ENCODE measurements at regions of chr11 and their contacts with region 1.

Region 1: DNA sequence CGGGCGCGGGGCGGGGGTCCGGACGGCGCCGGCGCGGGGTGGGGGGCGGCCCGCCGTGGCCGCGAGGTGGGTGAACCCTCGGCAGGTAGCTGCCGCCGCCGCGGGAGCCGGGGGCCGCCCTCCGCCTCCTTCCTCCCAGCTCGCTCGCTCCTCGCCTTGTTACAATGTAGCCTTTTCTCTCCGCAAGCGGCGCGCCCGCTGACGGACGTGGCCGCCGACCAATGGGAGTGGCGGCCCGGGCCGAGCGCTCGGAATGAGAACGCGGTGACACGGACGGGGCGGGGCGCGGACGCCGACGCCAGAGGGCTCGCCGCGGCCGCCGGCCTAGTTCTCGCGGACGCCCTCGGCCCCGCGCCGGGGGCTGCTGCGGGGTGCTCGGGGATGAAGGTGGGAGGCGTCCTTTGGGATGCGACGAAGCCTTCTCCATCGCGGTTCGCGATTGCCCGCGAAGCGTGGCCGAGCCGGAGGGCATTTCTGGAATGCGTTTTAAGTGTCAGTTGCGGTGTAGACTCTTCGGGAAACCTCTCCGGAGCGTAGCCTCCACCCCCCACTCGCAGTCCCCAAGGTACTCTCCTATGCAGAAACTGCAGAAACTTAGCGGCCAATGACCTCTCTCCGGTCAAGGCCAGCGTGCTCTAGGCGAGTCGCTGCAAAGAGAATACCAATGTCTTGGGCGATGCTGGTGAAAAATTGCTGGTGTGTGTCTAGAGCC is 734 bp downstream of the PRDM11 start:
- DNase-seq: peak; percentile 84 to 96 (median 91)
- ATAC-seq: peak; percentile 96
- H3K4me3 ChIP-seq: peak overlapping the region; percentile 78 to 89
- H3K4me3 Mint-ChIP-seq: peak overlapping the region; percentile 84
- H3K27ac ChIP-seq: peak overlapping the region; percentile 52 to 70
- H3K27ac Mint-ChIP-seq: peak overlapping the region; percentile 89
- H3K4me1 ChIP-seq: peaks cover 16% of the 10 kb centered on the region
- H3K4me1 Mint-ChIP-seq: peaks cover 38% of the 10 kb centered on the region
- H3K27me3 ChIP-seq: no peaks in the 10 kb centered on the region
- H3K27me3 Mint-ChIP-seq: peaks cover 10% of the 10 kb centered on the region
- CTCF ChIP-seq: no peak

Region 2: GRCh38 chr11:44065841-44066731 is 1081.1 kb before region 1 on chr11 and contains the start of gene ACCS:
- CTCF ChIA-PET with region 1: no interaction called
- POLR2A ChIA-PET with region 1: no interaction called
- intact Hi-C with region 1: loop called in 1 of 2 experiments (anchors 5 kb)
- DNase-seq: peak; percentile 80 to 96 (median 93)
- ATAC-seq: peak; percentile 96
- H3K4me3 ChIP-seq: peak within 1 kb of the TSS; percentile 80 to 83
- H3K4me3 Mint-ChIP-seq: peak within 1 kb of the TSS; percentile 91
- H3K27ac ChIP-seq: peak within 1 kb of the TSS; percentile 70 to 71
- H3K27ac Mint-ChIP-seq: peak within 1 kb of the TSS; percentile 92
- H3K4me1 ChIP-seq: peaks cover 6% of the 10 kb centered on the region
- H3K4me1 Mint-ChIP-seq: peaks cover 30% of the 10 kb centered on the region
- H3K27me3 ChIP-seq: no peaks in the 10 kb centered on the region
- H3K27me3 Mint-ChIP-seq: no peaks in the 10 kb centered on the region
- CTCF ChIP-seq: peak; percentile 83
- total RNA-seq, gene ACCS: 16.7 to 18.1 TPM

Region 3: DNA sequence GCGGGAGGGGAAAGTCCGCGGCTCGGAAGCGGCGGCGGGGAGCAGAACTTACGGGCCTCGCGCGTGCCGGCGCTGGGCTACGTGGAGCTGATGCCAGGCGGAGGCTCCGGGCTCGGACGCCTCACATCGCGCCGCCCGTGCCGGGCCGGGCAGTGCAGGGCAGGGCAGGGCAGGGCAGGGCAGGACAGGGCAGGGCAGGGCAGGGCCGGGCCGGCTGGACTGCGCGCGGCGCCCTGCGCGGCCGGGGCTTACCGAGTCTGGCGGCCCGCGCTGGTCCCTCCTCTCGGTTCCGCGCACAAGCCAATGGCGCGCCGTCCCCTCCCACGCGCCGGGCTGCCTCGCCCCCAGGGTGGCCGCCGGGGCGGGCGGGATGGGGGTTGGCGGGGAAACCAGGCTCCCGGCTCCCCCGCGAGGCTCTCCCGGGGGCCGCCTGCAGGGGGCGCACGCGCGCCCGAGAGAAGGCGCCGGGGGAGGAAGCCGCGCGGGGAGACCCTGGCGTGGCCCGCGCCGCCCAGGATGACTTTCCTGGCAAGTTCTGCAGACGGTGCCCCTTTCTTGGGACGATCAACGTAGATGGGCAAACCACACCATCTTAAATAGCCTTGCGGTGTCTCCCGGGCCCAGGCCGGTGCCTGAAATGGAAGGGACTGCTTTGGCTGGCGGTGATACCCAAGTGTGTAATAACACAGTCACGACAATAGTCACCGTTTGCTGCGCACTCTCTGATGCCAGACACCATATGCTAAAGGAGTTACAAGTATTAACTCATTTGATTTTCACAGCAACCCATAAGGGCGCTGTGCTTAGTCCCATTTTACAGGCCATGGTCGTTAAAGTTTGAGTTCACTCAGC is 196.3 kb before region 1 on chr11 and contains the start of gene TP53I11:
- CTCF ChIA-PET with region 1: no interaction called
- POLR2A ChIA-PET with region 1: interaction called, 3 read pairs
- intact Hi-C with region 1: loop called in 1 of 2 experiments (anchors 1 kb)
- DNase-seq: peak; percentile 31 to 82 (median 52)
- ATAC-seq: peak; percentile 79
- H3K4me3 ChIP-seq: peak within 1 kb of the TSS; percentile 56 to 73
- H3K4me3 Mint-ChIP-seq: peak within 1 kb of the TSS; percentile 86
- H3K27ac ChIP-seq: no peak within 1 kb of the TSS
- H3K27ac Mint-ChIP-seq: no peak within 1 kb of the TSS
- H3K4me1 ChIP-seq: no peaks in the 10 kb centered on the region
- H3K4me1 Mint-ChIP-seq: peaks cover 7% of the 10 kb centered on the region
- H3K27me3 ChIP-seq: no peaks in the 10 kb centered on the region
- H3K27me3 Mint-ChIP-seq: no peaks in the 10 kb centered on the region
- CTCF ChIP-seq: peak; percentile 47
- total RNA-seq, gene TP53I11: 4.8 to 6.8 TPM

Region 4: GRCh38 chr11:45097721-45098493 is 49.3 kb before region 1 on chr11:
- CTCF ChIA-PET with region 1: no interaction called
- POLR2A ChIA-PET with region 1: no interaction called
- intact Hi-C with region 1: no loop called
- DNase-seq: peak in 5 of 9 experiments; percentile 37 to 66 (median 53)
- ATAC-seq: no peak
- H3K4me3 ChIP-seq: no peak overlapping the region
- H3K4me3 Mint-ChIP-seq: no peak overlapping the region
- H3K27ac ChIP-seq: no peak overlapping the region
- H3K27ac Mint-ChIP-seq: no peak overlapping the region
- H3K4me1 ChIP-seq: peaks cover 20% of the 10 kb centered on the region
- H3K4me1 Mint-ChIP-seq: peaks cover 20% of the 10 kb centered on the region
- H3K27me3 ChIP-seq: no peaks in the 10 kb centered on the region
- H3K27me3 Mint-ChIP-seq: peaks cover 9% of the 10 kb centered on the region
- CTCF ChIP-seq: no peak

Region 5: GRCh38 chr11:45339729-45340519 is 192.8 kb after region 1 on chr11:
- CTCF ChIA-PET with region 1: no interaction called
- POLR2A ChIA-PET with region 1: no interaction called
- intact Hi-C with region 1: loop called in 1 of 2 experiments (anchors 2 kb)
- DNase-seq: peak; percentile 81 to 96 (median 92)
- ATAC-seq: peak; percentile 100
- H3K4me3 ChIP-seq: peak overlapping the region in 1 of 2 experiments; percentile 27
- H3K4me3 Mint-ChIP-seq: peak overlapping the region; percentile 60
- H3K27ac ChIP-seq: no peak overlapping the region
- H3K27ac Mint-ChIP-seq: no peak overlapping the region
- H3K4me1 ChIP-seq: peaks cover 8% of the 10 kb centered on the region
- H3K4me1 Mint-ChIP-seq: peaks cover 10% of the 10 kb centered on the region
- H3K27me3 ChIP-seq: peaks cover 0 to 4% of the 10 kb centered on the region in 2 experiments
- H3K27me3 Mint-ChIP-seq: peaks cover 10% of the 10 kb centered on the region
- CTCF ChIP-seq: peak; percentile 87

Region 6: GRCh38 chr11:45771566-45772448 is 624.6 kb after region 1 on chr11:
- CTCF ChIA-PET with region 1: no interaction called
- POLR2A ChIA-PET with region 1: no interaction called
- intact Hi-C with region 1: loop called in 1 of 2 experiments (anchors 5 kb)
- DNase-seq: peak; percentile 55 to 88 (median 81)
- ATAC-seq: peak; percentile 84
- H3K4me3 ChIP-seq: peak overlapping the region; percentile 51 to 81
- H3K4me3 Mint-ChIP-seq: peak overlapping the region; percentile 91
- H3K27ac ChIP-seq: peak overlapping the region in 1 of 2 experiments; percentile 75
- H3K27ac Mint-ChIP-seq: peak overlapping the region; percentile 74
- H3K4me1 ChIP-seq: peaks cover 6% of the 10 kb centered on the region
- H3K4me1 Mint-ChIP-seq: peaks cover 16% of the 10 kb centered on the region
- H3K27me3 ChIP-seq: no peaks in the 10 kb centered on the region
- H3K27me3 Mint-ChIP-seq: peaks cover 4% of the 10 kb centered on the region
- CTCF ChIP-seq: peak; percentile 67

Region 7: GRCh38 chr11:45982656-45983470 is 835.7 kb after region 1 on chr11:
- CTCF ChIA-PET with region 1: no interaction called
- POLR2A ChIA-PET with region 1: no interaction called
- intact Hi-C with region 1: no loop called
- DNase-seq: no peak
- ATAC-seq: no peak
- H3K4me3 ChIP-seq: no peak overlapping the region
- H3K4me3 Mint-ChIP-seq: no peak overlapping the region
- H3K27ac ChIP-seq: no peak overlapping the region
- H3K27ac Mint-ChIP-seq: no peak overlapping the region
- H3K4me1 ChIP-seq: no peaks in the 10 kb centered on the region
- H3K4me1 Mint-ChIP-seq: peaks cover 21% of the 10 kb centered on the region
- H3K27me3 ChIP-seq: no peaks in the 10 kb centered on the region
- H3K27me3 Mint-ChIP-seq: no peaks in the 10 kb centered on the region
- CTCF ChIP-seq: no peak